H1 (cell line): ENCODE measurements at regions of chr18 and their contacts with region 1.

Region 1: GRCh38 chr18:79964330-79965118 is at the start of gene HSBP1L1:
- DNase-seq: peak in 1 of 2 experiments; percentile 84
- H3K4me3 ChIP-seq: peak within 1 kb of the TSS; percentile 33 to 64 (median 35)
- H3K27ac ChIP-seq: no peak within 1 kb of the TSS
- H3K4me1 ChIP-seq: peaks cover 2 to 21% (median 19%) of the 10 kb centered on the region in 4 experiments; a peak in 6 of 7 replicates
- H3K27me3 ChIP-seq: peaks cover 3 to 47% (median 40%) of the 10 kb centered on the region in 4 experiments
- CTCF ChIP-seq: peak; percentile 26 to 40 (median 33)
- EP300 ChIP-seq: no peak
- POLR2A ChIP-seq: no peak
- RAD21 ChIP-seq: peak; percentile 2 to 31; a peak in 3 of 4 replicates
- total RNA-seq, gene HSBP1L1: 0.69 and 1.0 TPM in 2 replicates

Region 2: GRCh38 chr18:79856119-79857007 is 108.2 kb before region 1 on chr18:
- CTCF ChIA-PET with region 1: no interaction called
- POLR2A ChIA-PET with region 1: no interaction called
- DNase-seq: peak; percentile 27 to 68
- H3K4me3 ChIP-seq: no peak overlapping the region
- H3K27ac ChIP-seq: no peak overlapping the region
- H3K4me1 ChIP-seq: peaks cover 0 to 5% (median 3%) of the 10 kb centered on the region in 4 experiments; a peak in 3 of 7 replicates
- H3K27me3 ChIP-seq: no peaks in the 10 kb centered on the region
- CTCF ChIP-seq: no peak
- EP300 ChIP-seq: no peak
- POLR2A ChIP-seq: no peak
- RAD21 ChIP-seq: no peak

Region 3: DNA sequence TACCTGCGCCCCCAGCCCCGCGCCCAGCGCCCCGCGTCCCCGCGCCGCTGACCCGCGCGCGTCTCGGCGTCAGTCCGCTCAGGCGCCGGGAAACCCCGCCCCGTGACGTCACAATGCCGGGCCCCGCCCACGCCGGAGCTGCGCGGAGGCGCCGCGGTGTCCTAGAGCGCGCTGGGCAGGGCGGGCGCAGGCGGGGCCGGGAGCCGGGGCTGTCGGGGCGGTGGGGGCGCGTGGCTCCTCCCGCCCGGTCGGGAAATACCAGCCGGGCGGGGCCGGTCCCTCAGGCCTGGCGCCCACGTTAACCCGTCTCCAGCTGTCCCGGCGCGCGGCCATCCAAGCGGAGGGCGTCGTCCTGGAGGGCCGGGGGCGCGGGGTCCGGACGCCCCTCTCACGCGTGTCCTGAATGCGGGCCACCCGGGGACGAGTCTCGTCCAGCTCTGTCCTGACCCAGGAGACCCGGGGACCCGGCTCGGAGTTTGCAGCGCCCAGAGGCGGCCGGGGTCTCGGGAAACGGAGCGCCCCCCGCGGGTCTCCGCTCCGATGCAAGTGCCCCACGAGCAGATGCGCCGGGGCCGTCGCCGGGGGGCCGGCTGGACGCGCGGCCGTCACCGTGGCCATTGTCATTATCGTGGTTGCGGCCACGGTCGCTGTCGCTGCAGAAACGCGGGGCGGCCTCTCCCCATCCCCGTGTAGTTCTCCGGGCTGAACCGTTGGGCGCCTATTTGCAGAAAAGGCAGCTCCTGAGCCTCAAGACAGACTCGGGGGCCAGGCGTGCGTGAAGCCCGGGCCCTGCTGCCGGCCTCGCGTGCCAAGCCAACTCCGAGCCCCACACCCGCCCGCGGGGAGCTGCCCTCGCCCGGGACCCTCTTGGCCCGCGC is 12.7 kb before region 1 on chr18 and contains the start of gene SLC66A2:
- CTCF ChIA-PET with region 1: interaction called, 17 read pairs
- POLR2A ChIA-PET with region 1: interaction called, 8 read pairs
- DNase-seq: peak in 1 of 2 experiments; percentile 99
- H3K4me3 ChIP-seq: peak within 1 kb of the TSS; percentile 57 to 84 (median 66)
- H3K27ac ChIP-seq: no peak within 1 kb of the TSS
- H3K4me1 ChIP-seq: peaks cover 2 to 9% (median 5%) of the 10 kb centered on the region in 4 experiments
- H3K27me3 ChIP-seq: peaks cover 10 to 44% (median 39%) of the 10 kb centered on the region in 4 experiments
- CTCF ChIP-seq: 0 out of 4 replicates have a peak, but pooled peaks of 1 of the 3 experiments have one; percentile 4
- EP300 ChIP-seq: no peak
- POLR2A ChIP-seq: no peak
- RAD21 ChIP-seq: no peak
- total RNA-seq, gene SLC66A2: 11.6 and 15.0 TPM in 2 replicates

Region 4: DNA sequence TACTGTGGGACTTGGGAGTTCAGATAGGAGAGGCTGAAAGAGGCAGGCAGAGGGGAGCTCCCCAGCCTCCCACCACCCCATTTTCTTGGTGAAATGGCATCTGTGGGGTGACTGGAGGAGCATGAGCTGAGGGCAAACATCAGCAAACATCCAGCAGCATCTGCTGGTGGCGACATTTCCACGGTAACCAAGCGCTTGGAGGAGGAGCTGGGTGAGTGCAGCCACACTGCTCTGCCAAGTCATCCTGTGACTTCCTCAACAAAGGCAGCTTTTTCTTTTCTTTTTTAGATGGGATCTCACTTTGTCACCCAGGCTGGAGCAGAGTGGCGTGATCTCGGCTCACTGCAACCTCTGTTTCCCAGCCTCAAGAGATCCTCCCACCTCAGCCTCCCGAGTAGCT is 18.2 kb after region 1 on chr18:
- CTCF ChIA-PET with region 1: interaction called, 9 read pairs
- POLR2A ChIA-PET with region 1: interaction called, 18 read pairs
- DNase-seq: no peak
- H3K4me3 ChIP-seq: no peak overlapping the region
- H3K27ac ChIP-seq: no peak overlapping the region
- H3K4me1 ChIP-seq: peaks cover 0 to 3% (median 0%) of the 10 kb centered on the region in 4 experiments; a peak in 1 of 7 replicates
- H3K27me3 ChIP-seq: no peaks in the 10 kb centered on the region
- CTCF ChIP-seq: no peak
- EP300 ChIP-seq: no peak
- POLR2A ChIP-seq: no peak; a peak in 1 of 3 replicates
- RAD21 ChIP-seq: no peak